ENCODE measurements at regions of chr18 and their contacts with region 1.

Region 1: DNA sequence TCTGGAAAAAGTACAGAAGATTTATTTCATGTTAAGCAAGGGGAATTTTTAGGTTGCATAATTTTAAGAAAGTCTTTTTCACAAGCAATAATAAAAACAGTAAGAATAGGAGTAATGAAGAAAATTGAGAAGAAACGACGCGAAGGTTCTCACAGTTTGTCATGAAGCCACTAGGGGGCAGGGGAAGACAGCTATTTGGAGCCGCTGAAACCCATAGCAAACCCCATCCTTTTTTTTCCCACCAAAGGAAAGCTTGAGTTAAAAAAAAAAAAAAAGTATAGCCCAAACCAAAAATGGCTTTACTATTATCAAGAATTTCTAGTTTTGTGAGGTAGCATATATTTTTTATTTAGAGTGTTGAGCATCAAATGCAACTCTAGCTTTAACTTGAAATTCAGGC is 300.9 kb downstream of the PHLPP1 start:
- DNase-seq: peak; percentile 64
- ATAC-seq: peak; percentile 64
- H3K4me3 Mint-ChIP-seq: no peak overlapping the region
- H3K27ac Mint-ChIP-seq: no peak overlapping the region
- H3K4me1 Mint-ChIP-seq: no peaks in the 10 kb centered on the region
- H3K27me3 Mint-ChIP-seq: peaks cover 13% of the 10 kb centered on the region

Region 2: GRCh38 chr18:62321201-62321600 is 695.1 kb before region 1 on chr18:
- CTCF ChIA-PET with region 1: no interaction called
- POLR2A ChIA-PET with region 1: no interaction called
- intact Hi-C with region 1: no loop called
- DNase-seq: no peak
- ATAC-seq: no peak
- H3K4me3 Mint-ChIP-seq: no peak overlapping the region
- H3K27ac Mint-ChIP-seq: no peak overlapping the region
- H3K4me1 Mint-ChIP-seq: peaks cover 10% of the 10 kb centered on the region
- H3K27me3 Mint-ChIP-seq: peaks cover 42% of the 10 kb centered on the region

Region 3: DNA sequence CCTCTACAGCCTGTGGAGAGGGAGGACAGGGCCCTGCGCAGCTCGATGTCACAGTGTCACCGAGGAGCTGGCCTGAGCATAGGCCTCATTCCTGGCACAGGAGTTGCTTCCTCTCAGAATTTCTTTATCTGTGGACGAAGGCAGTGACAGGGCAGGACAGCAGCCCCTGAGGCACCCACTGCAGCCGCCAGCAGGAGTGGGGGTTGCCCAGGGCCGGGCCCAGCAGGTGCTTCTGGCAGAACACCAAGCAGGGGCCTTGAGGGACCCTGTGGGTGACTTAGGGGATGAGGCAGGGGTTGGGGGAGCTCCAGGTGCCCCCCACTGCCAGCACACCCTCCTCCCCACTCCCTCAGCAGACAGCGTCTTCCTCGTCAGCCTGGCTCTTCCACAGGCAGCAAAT is 11.0 kb before region 1 on chr18:
- CTCF ChIA-PET with region 1: interaction called, 16 read pairs
- POLR2A ChIA-PET with region 1: no interaction called
- intact Hi-C with region 1: no loop called
- DNase-seq: no peak
- ATAC-seq: no peak
- H3K4me3 Mint-ChIP-seq: no peak overlapping the region
- H3K27ac Mint-ChIP-seq: no peak overlapping the region
- H3K4me1 Mint-ChIP-seq: no peaks in the 10 kb centered on the region
- H3K27me3 Mint-ChIP-seq: no peaks in the 10 kb centered on the region

Region 4: GRCh38 chr18:63074981-63075404 is 58.7 kb after region 1 on chr18:
- CTCF ChIA-PET with region 1: interaction called, 7 read pairs
- POLR2A ChIA-PET with region 1: no interaction called
- intact Hi-C with region 1: loop called in 1 of 2 experiments (anchors 1 kb)
- DNase-seq: peak; percentile 84
- ATAC-seq: peak; percentile 90
- H3K4me3 Mint-ChIP-seq: peak overlapping the region; percentile 66
- H3K27ac Mint-ChIP-seq: no peak overlapping the region
- H3K4me1 Mint-ChIP-seq: peaks cover 7% of the 10 kb centered on the region
- H3K27me3 Mint-ChIP-seq: peaks cover 6% of the 10 kb centered on the region

Region 5: DNA sequence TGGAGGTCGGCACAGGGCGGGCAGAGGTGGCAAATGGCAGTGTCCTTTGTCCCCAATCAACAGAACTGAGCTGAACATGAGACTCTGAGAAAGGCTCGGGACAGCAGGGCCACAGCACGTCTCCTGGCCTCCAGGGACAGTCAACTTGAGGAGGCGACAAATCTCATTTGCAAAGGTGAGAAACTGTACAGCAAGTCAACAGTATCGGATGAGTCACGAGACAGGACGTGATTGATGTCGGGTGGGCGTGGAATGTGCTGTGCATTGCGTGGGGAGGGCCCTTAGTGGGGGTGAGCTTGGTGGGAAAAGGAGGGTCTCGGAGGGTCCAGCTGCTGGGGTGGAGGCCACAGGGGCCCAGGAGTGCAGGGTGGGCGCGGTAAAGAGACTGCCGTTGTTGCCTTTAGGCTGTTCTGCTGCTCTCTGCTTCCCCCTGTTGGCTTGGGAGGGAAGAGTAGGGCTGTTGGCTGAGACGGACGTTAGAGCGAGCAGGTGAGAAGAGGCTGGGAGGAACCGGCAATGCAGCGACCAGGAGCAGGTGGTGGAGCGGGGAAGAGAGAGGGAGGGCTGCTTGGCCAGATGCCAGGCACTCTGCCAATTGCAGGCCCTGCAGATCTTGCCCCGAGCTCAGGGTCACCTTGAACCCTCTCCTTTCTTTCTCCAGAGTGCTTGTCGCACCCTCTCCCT is 139.0 kb after region 1 on chr18:
- CTCF ChIA-PET with region 1: interaction called, 13 read pairs
- POLR2A ChIA-PET with region 1: no interaction called
- intact Hi-C with region 1: no loop called
- DNase-seq: peak; percentile 89
- ATAC-seq: peak; percentile 66
- H3K4me3 Mint-ChIP-seq: peak overlapping the region; percentile 73
- H3K27ac Mint-ChIP-seq: peak overlapping the region; percentile 95
- H3K4me1 Mint-ChIP-seq: peaks cover 99% of the 10 kb centered on the region
- H3K27me3 Mint-ChIP-seq: no peaks in the 10 kb centered on the region

Region 6: GRCh38 chr18:63367053-63367953 is 351.0 kb after region 1 on chr18 and contains the start of gene KDSR:
- CTCF ChIA-PET with region 1: interaction called, 13 read pairs
- POLR2A ChIA-PET with region 1: no interaction called
- intact Hi-C with region 1: no loop called
- DNase-seq: peak; percentile 92
- ATAC-seq: peak; percentile 85
- H3K4me3 Mint-ChIP-seq: peak within 1 kb of the TSS; percentile 96
- H3K27ac Mint-ChIP-seq: peak within 1 kb of the TSS; percentile 85
- H3K4me1 Mint-ChIP-seq: peaks cover 36% of the 10 kb centered on the region
- H3K27me3 Mint-ChIP-seq: no peaks in the 10 kb centered on the region
- total RNA-seq, gene KDSR: 72.6 to 78.6 TPM

Region 7: DNA sequence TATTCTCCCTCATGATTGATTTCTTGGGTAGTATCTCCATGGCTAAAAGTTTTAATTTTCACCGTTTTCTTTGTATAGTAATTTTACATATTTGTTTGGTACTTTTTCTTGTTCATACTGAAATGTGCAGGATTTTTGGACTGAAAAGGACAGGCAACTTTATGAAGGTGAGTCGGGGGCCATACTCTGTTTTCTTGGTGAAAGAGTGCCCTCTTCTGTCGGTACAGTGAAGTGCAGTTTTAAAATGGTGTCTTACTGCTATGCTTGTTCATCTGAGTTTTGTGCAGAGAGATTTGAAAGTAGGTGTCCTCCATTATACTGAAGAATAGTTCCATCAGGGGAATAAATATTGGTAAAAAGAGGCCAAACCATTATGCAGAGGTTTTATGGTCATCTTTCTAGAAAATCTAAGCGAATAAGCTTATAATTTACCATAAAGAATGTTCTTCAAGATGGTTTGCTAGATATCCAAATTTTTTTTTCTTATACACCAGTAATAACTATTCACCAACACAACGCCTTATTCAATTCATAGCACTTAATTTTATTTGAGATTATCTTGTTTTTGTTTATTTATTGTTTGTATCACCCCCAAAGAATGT is 562.2 kb after region 1 on chr18:
- CTCF ChIA-PET with region 1: interaction called, 4 read pairs
- POLR2A ChIA-PET with region 1: no interaction called
- intact Hi-C with region 1: loop called in 1 of 2 experiments (anchors 1 kb)
- DNase-seq: peak; percentile 27
- ATAC-seq: no peak
- H3K4me3 Mint-ChIP-seq: no peak overlapping the region
- H3K27ac Mint-ChIP-seq: no peak overlapping the region
- H3K4me1 Mint-ChIP-seq: no peaks in the 10 kb centered on the region
- H3K27me3 Mint-ChIP-seq: peaks cover 8% of the 10 kb centered on the region